Activated CD4-positive, alpha-beta memory T cell treated with anti-CD3 and anti-CD28 coated beads for 36 hours (primary cell): ENCODE measurements at regions of chr10 and their contacts with region 1.

Region 1: DNA sequence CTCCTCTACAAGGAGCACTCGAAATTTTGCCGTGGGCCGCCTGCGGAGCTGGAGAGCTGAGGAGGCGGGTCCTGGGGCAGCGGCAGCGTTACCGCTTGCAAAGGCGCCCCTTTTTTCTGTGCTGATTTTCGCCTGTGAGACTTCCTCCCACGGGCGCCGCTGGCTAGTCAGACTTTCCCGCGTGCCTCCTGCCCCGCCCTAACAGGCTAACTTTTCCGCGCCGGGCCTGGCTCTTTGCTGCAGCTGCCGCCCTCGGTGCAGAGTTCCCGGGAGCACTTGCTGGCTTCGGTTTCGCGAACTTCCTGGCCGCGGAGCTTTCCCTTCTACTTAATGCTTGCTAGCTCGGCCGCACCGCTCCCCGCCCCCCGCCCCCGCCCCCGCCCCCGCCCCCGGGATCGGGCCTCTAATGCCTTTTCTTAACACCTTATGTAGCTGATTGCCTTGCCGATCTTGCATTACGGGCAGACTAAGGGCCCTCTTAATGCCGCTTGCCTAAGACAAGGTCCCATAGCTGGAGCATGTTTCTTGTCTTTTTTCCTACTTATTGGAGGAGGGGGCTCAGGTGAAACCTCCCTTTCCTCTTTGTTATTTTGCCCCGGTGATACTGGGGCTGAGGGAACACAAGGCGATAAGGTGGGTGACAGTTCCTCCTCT is 37.9 kb upstream of the RASGEF1A start:
- DNase-seq: peak; percentile 78
- H3K4me3 Mint-ChIP-seq: peak overlapping the region; percentile 69
- H3K27ac Mint-ChIP-seq: peak overlapping the region; percentile 23
- H3K4me1 Mint-ChIP-seq: peaks cover 58% of the 10 kb centered on the region
- H3K27me3 Mint-ChIP-seq: no peaks in the 10 kb centered on the region

Region 2: DNA sequence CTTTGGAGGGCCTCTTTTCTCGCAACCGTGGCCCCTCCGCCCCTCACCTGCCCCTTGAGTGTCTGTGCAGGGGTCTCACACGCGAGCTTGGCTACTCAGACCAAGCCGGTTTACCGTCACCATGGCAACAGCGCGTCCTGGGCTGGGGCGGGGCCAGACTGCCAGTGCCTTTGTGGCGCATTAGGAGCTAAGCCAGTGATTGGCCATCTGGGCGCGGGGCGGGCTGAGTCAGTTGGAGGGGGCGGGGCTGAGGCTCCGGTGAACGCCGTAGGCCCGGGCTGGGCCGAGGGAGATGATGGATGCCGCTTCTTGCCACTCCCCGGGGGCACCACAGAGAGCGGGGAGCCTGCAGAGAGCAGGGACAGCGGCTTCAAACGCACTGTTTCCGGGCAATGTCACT is 18.0 kb after region 1 on chr10:
- CTCF ChIA-PET with region 1: no interaction called
- POLR2A ChIA-PET with region 1: interaction called, 3 read pairs
- intact Hi-C with region 1: loop called (anchors 2 kb)
- DNase-seq: peak; percentile 93
- H3K4me3 Mint-ChIP-seq: peak overlapping the region; percentile 45
- H3K27ac Mint-ChIP-seq: no peak overlapping the region
- H3K4me1 Mint-ChIP-seq: peaks cover 10% of the 10 kb centered on the region
- H3K27me3 Mint-ChIP-seq: no peaks in the 10 kb centered on the region